IMR-90 (cell line): ENCODE measurements at regions of chr22 and their contacts with region 1.

Region 1: DNA sequence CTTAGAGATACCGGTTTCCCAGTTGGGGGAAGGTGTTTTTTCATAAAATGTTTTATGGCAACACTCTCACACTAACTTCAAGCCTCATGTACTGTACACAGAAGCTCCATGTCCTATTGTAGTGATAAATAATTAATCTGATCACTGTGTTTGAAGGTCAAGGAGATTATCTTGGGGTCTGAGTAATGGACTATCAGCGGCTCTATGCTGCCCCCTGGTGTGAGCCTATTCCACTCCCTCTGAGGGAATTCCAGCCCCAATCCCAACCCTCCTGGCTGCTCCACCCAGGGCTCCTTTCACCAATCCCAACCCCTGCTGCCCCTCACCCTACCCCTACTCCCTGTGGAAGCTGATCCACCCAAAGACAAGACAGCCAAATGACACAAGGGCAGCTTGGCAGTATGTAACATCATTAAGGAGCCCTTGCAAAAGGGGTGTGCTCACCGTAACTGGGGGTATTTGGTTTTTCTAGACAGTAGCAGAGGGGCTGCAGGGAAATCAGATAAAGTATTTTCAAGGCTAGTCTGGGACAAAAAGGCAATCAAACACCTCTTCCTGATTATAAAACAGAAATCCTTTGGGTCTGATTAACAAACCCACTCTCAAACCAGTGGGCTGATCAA is 22.3 kb downstream of the HPS4 start:
- DNase-seq: peak; percentile 28
- ATAC-seq: peak; percentile 99
- H3K4me3 ChIP-seq: no peak overlapping the region
- H3K27ac ChIP-seq: no peak overlapping the region
- H3K4me1 ChIP-seq: no peaks in the 10 kb centered on the region
- H3K27me3 ChIP-seq: no peaks in the 10 kb centered on the region
- CTCF ChIP-seq: peak; percentile 79
- POLR2A ChIP-seq: no peak
- RAD21 ChIP-seq: peak; percentile 78

Region 2: DNA sequence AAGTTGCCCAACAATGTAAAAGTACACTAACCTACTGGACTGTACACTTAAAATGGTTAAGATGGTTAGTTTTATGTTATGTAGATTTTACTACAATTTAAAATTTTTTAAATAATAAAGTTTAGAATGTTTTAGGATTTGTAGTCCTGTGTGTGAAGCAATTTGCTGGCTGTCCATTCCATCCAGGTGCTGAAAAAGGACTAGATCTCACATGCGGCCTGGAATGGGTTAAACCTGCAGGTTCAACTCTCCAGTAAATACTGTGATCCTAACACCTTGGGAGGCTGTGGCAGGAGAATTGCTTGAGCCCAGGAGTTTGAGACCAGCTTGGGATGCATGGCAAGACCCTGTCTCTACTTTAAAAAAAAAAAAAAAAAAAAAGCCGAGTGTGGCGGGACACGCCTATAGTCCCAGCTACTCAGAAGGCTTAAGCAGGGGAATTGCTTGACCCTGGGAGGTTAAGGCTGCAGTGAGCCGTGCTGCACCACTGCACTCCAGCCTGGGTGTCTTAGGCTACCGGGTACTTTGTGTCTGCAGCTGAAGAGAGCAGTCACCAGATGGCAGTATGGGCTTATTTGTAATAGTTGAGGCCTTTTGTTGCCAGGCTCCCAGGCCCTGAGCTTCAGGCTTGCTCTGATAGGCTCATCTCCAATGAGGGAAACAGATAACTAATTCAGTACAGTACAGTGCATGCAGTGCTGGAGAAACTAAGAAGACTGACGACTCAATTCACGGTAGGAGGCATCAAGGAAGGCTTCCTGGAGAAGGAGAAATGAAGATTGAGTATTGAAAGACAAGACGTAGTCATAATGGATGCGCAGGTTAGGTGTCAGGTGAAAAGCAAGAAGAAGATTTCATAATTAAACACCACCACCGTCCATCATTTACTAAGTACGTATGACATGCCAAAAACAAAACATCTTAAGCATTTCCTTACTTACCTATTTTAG is 97.0 kb before region 1 on chr22:
- CTCF ChIA-PET with region 1: interaction called, 14 read pairs
- POLR2A ChIA-PET with region 1: no interaction called
- dilution Hi-C with region 1: no loop called
- in situ Hi-C with region 1: no loop called
- intact Hi-C with region 1: loop called (anchors 1 kb)
- DNase-seq: peak; percentile 80
- ATAC-seq: peak; percentile 92
- H3K4me3 ChIP-seq: no peak overlapping the region
- H3K27ac ChIP-seq: no peak overlapping the region
- H3K4me1 ChIP-seq: no peaks in the 10 kb centered on the region
- H3K27me3 ChIP-seq: peaks cover 4% of the 10 kb centered on the region; the same call in 1 of the 2 replicates
- CTCF ChIP-seq: peak; percentile 73
- POLR2A ChIP-seq: no peak
- RAD21 ChIP-seq: peak; percentile 74

Region 3: DNA sequence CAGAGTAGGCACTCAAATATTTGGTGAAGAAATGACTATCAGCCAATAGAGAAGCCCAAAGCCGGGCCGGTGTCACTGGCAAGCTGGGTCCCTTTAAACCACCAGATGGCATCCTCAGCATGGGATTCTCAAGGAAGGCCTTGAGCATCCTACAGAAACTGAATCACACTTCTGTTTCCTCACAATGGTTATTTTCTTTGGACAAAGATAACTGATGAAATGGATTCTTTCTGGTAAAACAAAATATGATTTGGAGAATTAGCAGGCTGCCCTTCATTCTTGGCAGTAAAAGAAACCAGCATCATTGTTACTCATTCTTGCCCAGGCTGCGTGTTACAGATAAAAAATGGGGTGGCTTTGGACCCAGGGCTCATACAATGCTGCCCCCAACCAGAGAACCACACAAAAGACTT is 62.6 kb before region 1 on chr22:
- CTCF ChIA-PET with region 1: interaction called, 6 read pairs
- POLR2A ChIA-PET with region 1: no interaction called
- dilution Hi-C with region 1: no loop called
- in situ Hi-C with region 1: loop called (anchors 5 kb)
- intact Hi-C with region 1: loop called (anchors 1 kb)
- DNase-seq: peak; percentile 77
- ATAC-seq: peak; percentile 97
- H3K4me3 ChIP-seq: no peak overlapping the region
- H3K27ac ChIP-seq: no peak overlapping the region
- H3K4me1 ChIP-seq: no peaks in the 10 kb centered on the region
- H3K27me3 ChIP-seq: peaks cover 16% of the 10 kb centered on the region
- CTCF ChIP-seq: peak; percentile 92
- POLR2A ChIP-seq: no peak
- RAD21 ChIP-seq: peak; percentile 94

Region 4: GRCh38 chr22:26404851-26405421 is 56.4 kb before region 1 on chr22:
- CTCF ChIA-PET with region 1: interaction called, 6 read pairs
- POLR2A ChIA-PET with region 1: no interaction called
- dilution Hi-C with region 1: no loop called
- in situ Hi-C with region 1: loop called (anchors 5 kb)
- intact Hi-C with region 1: no loop called
- DNase-seq: no peak
- ATAC-seq: no peak
- H3K4me3 ChIP-seq: no peak overlapping the region
- H3K27ac ChIP-seq: no peak overlapping the region
- H3K4me1 ChIP-seq: no peaks in the 10 kb centered on the region
- H3K27me3 ChIP-seq: peaks cover 23% of the 10 kb centered on the region
- CTCF ChIP-seq: no peak
- POLR2A ChIP-seq: no peak
- RAD21 ChIP-seq: no peak

Region 5: GRCh38 chr22:26418620-26419019 is 42.7 kb before region 1 on chr22:
- CTCF ChIA-PET with region 1: no interaction called
- POLR2A ChIA-PET with region 1: no interaction called
- dilution Hi-C with region 1: no loop called
- in situ Hi-C with region 1: no loop called
- intact Hi-C with region 1: loop called (anchors 1 kb)
- DNase-seq: no peak
- ATAC-seq: no peak
- H3K4me3 ChIP-seq: no peak overlapping the region
- H3K27ac ChIP-seq: no peak overlapping the region
- H3K4me1 ChIP-seq: no peaks in the 10 kb centered on the region
- H3K27me3 ChIP-seq: peaks cover 10% of the 10 kb centered on the region
- CTCF ChIP-seq: no peak
- POLR2A ChIP-seq: no peak
- RAD21 ChIP-seq: no peak

Region 6: GRCh38 chr22:26642465-26643417 is 181.4 kb after region 1 on chr22:
- CTCF ChIA-PET with region 1: no interaction called
- POLR2A ChIA-PET with region 1: no interaction called
- dilution Hi-C with region 1: no loop called
- in situ Hi-C with region 1: no loop called
- intact Hi-C with region 1: no loop called
- DNase-seq: no peak
- ATAC-seq: no peak
- H3K4me3 ChIP-seq: no peak overlapping the region
- H3K27ac ChIP-seq: no peak overlapping the region
- H3K4me1 ChIP-seq: peaks cover 9% of the 10 kb centered on the region
- H3K27me3 ChIP-seq: peaks cover 13% of the 10 kb centered on the region
- CTCF ChIP-seq: no peak
- POLR2A ChIP-seq: no peak
- RAD21 ChIP-seq: no peak

Region 7: DNA sequence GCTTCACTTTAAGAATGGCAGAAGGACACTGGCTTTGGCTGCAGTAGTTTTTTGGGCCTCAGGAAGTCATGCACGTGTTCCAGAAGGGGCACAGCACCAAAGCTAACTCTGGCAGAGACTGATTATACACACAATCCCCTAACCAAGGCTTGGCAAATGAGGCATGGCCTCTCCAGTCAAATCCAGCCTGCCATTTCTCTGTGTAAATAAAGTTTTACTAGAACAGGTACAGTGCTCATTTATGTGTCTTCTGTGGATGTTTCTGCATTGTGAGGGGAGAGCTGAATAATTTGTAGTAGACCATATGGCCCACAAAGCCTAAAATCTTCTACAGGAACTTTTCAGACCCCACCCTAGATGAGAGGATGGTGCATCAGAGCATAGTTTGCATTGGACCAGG is 1386.7 kb after region 1 on chr22:
- CTCF ChIA-PET with region 1: no interaction called
- POLR2A ChIA-PET with region 1: interaction called, 12 read pairs
- dilution Hi-C with region 1: no loop called
- in situ Hi-C with region 1: no loop called
- intact Hi-C with region 1: no loop called
- DNase-seq: no peak
- ATAC-seq: no peak
- H3K4me3 ChIP-seq: no peak overlapping the region
- H3K27ac ChIP-seq: no peak overlapping the region
- H3K4me1 ChIP-seq: peaks cover 16% of the 10 kb centered on the region
- H3K27me3 ChIP-seq: no peaks in the 10 kb centered on the region
- CTCF ChIP-seq: no peak
- POLR2A ChIP-seq: no peak
- RAD21 ChIP-seq: no peak